ENCODE measurements at regions of chr9 and their contacts with region 1.

Region 1: DNA sequence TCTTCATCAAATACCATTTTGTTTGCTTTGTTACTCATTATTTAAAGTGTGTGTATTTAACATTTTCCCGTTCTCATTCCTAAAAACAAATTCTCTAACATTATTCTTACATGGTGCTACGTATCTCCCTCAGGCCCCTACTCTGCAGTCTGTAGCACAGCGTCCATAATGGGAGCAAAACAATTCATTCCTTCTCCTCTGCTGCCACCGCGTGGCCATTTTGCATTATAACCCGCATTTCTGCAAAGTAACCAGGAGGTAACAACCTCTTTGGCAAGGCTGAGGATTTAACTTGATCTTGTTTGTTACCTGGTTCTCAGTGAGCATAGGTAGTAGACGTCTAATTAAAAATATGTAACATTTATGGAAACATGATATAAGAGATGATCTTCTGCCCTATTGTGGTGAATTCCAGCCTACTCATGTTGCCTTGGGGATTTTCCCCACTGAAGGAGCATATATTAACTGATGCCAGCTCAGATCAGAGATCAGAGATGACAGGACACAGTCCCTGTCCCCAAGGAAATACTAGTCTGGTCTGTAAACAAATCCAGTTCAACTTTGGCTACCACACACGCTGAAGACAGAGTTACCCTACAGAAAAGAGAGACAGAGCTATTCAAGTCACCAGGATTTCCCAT is 10.5 kb downstream of the OR1K1 start:
- DNase-seq: peak; percentile 75
- ATAC-seq: peak; percentile 93
- H3K4me3 ChIP-seq: no peak overlapping the region
- H3K27ac ChIP-seq: no peak overlapping the region
- H3K4me1 ChIP-seq: peaks cover 27% of the 10 kb centered on the region
- H3K27me3 ChIP-seq: no peaks in the 10 kb centered on the region
- CTCF ChIP-seq: peak; percentile 93
- EP300 ChIP-seq: no peak
- POLR2A ChIP-seq: no peak
- RAD21 ChIP-seq: peak; percentile 82

Region 2: DNA sequence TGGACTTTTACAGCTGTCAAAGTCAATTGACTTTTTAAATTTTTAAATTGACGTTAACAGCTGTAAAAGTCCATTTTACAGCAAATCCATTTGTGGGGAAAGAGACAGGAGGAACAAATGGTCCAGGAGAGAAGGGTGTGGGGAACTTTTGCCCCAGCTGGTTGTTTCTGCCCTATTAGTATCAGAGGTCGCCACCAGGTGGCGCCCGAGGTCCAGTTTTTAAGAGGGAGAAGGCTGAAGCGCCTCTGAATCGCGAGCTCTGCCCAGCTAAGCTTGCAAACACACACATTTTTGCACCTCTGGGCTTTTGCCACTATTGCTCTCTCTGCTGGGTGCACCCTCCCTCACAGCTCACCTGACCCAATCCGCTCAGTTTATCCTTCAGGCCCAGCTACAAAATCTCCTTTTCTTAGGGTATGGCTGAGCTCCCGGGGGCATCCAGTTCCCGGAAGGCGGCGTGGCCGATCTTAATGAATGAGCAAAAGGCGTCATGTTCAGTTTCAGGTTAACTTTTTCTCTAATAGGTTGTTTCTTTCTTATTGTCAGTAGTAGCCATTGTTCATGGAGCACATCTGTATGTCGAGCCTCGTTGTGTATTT is 711.1 kb before region 1 on chr9:
- CTCF ChIA-PET with region 1: no interaction called
- POLR2A ChIA-PET with region 1: no interaction called
- in situ Hi-C with region 1: loop called (anchors 10 kb)
- intact Hi-C with region 1: loop called (anchors 5 kb)
- DNase-seq: peak; percentile 60
- ATAC-seq: peak; percentile 88
- H3K4me3 ChIP-seq: peak overlapping the region in 1 of 3 experiments; percentile 56; a peak in 1 of 6 replicates
- H3K27ac ChIP-seq: no peak overlapping the region
- H3K4me1 ChIP-seq: peaks cover 23% of the 10 kb centered on the region
- H3K27me3 ChIP-seq: peaks cover 0 to 13% of the 10 kb centered on the region in 2 experiments
- CTCF ChIP-seq: peak; percentile 83
- EP300 ChIP-seq: no peak
- POLR2A ChIP-seq: no peak
- RAD21 ChIP-seq: peak; percentile 81

Region 3: GRCh38 chr9:122107291-122107805 is 703.1 kb before region 1 on chr9:
- CTCF ChIA-PET with region 1: no interaction called
- POLR2A ChIA-PET with region 1: no interaction called
- in situ Hi-C with region 1: loop called (anchors 10 kb)
- intact Hi-C with region 1: no loop called
- DNase-seq: no peak
- ATAC-seq: peak; percentile 59
- H3K4me3 ChIP-seq: no peak overlapping the region
- H3K27ac ChIP-seq: no peak overlapping the region
- H3K4me1 ChIP-seq: no peaks in the 10 kb centered on the region
- H3K27me3 ChIP-seq: peaks cover under 1 to 2% of the 10 kb centered on the region in 2 experiments; a peak in 3 of 5 replicates
- CTCF ChIP-seq: no peak
- EP300 ChIP-seq: no peak
- POLR2A ChIP-seq: no peak
- RAD21 ChIP-seq: no peak

Region 4: DNA sequence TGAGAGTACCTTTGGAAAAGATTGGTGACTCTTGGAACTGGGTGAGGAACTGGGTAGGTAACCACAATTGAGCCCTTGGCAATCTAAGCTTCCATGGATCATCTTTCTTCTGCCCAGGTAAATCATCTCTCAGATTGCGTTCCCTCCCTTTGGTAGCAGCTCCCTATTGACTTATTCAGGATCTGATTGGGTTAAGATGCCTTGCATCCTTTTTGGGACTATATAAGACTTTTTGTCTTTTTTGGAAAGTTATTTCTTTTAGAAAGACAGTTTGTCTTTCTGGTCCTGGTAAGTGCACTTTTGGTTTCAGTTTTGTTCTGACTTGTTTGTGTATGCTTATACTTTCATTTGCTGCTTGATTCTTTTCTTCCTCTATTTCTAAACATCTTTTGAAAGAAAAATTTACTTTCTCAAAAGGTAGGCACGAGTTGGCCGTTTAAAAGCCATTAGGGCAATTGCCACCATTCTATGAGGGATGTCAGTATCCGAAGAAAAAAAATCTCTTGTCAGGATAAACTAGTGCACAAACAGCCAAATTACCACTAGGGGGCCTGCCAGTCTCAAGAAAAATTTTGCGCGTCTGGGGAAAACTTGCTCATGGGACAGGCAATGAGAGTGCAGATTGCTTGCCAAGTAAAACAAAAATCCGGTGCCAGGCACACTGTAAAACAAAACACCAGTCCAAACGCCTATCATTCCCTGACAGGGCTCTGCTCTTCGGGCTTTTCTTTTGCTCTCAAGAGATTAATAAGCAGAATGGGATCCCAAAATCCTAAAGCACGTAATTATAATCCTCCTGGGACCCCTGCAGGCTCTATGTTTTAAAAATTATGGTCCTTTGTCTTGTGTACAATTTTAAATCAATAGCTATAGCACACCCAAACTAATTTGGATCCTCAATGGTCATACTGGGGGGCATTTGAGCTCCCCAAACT is 345.5 kb before region 1 on chr9:
- CTCF ChIA-PET with region 1: interaction called, 49 read pairs
- POLR2A ChIA-PET with region 1: interaction called, 3 read pairs
- in situ Hi-C with region 1: loop called (anchors 5 kb)
- intact Hi-C with region 1: loop called (anchors 1 kb)
- DNase-seq: peak; percentile 60
- ATAC-seq: peak; percentile 67
- H3K4me3 ChIP-seq: peak overlapping the region; percentile 64 to 75 (median 66)
- H3K27ac ChIP-seq: no peak overlapping the region
- H3K4me1 ChIP-seq: no peaks in the 10 kb centered on the region
- H3K27me3 ChIP-seq: peaks cover 0 to 6% of the 10 kb centered on the region in 2 experiments; a peak in 1 of 5 replicates
- CTCF ChIP-seq: peak; percentile 80
- EP300 ChIP-seq: no peak
- POLR2A ChIP-seq: no peak
- RAD21 ChIP-seq: peak; percentile 46; the same call in 1 of the 2 replicates

Region 5: GRCh38 chr9:122506964-122507363 is 303.5 kb before region 1 on chr9:
- CTCF ChIA-PET with region 1: no interaction called
- POLR2A ChIA-PET with region 1: no interaction called
- in situ Hi-C with region 1: loop called (anchors 10 kb)
- intact Hi-C with region 1: no loop called
- DNase-seq: no peak
- ATAC-seq: no peak
- H3K4me3 ChIP-seq: no peak overlapping the region
- H3K27ac ChIP-seq: no peak overlapping the region
- H3K4me1 ChIP-seq: peaks cover 8% of the 10 kb centered on the region; the same call in 1 of the 2 replicates
- H3K27me3 ChIP-seq: peaks cover 0 to 3% of the 10 kb centered on the region in 2 experiments; a peak in 1 of 5 replicates
- CTCF ChIP-seq: no peak
- EP300 ChIP-seq: no peak
- POLR2A ChIP-seq: no peak
- RAD21 ChIP-seq: no peak